Posterior vena cava (tissue), 2 donors: ENCODE measurements at regions of chr20 and their contacts with region 1.

Region 1: GRCh38 chr20:50790651-50791277 is 4.1 kb upstream of the BCAS4 start:
- DNase-seq: peak; percentile 97

Region 2: DNA sequence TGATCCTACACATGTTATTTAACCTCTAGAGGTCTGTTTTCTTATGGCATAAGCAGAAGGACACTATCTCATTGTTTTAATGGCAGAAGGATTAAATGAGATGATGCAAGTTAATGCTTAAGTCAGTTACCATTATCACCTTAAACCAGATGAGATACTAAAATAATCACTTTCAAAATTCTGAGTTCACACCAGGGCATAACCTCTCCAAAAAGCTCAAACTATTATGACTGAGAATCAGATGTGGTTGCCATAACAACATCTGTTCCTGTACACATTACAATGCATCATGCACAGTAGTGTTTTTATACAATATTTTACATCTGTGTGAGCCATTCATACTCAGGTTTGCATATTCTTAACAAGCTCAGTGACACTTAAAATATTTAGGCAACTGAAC is 130.2 kb after region 1 on chr20:
- intact Hi-C with region 1: loop called in 1 of 2 experiments (anchors 5 kb)
- DNase-seq: no peak

Region 3: DNA sequence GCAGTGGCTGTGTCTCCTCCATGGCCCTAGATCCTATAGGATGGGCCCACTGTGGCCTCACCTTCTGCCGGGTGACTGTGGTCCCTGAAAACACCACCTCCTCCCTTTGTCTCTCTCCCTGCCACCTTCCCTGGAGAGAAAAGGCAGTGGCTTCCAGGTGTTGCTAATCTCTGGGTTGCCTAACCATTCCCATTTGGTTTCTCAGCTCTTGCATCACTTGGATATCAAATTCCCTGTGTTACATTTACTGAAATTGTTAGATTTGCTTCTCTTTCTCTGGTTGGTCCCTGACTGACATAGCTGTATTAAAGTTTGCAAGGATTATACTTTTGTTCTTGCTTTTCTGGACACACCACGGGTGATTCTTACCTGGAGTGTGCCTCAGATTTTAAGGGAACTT is 1410.1 kb after region 1 on chr20:
- intact Hi-C with region 1: no loop called
- DNase-seq: no peak